Naive thymus-derived CD4-positive, alpha-beta T cell (primary cell): ENCODE measurements at regions of chr12 and their contacts with region 1.

Region 1: GRCh38 chr12:57744777-57745484 is at the start of gene TSPAN31:
- DNase-seq: peak; percentile 70 to 97 (median 94)
- ATAC-seq: peak; percentile 89
- H3K4me3 ChIP-seq: peak within 1 kb of the TSS; percentile 92
- H3K4me3 Mint-ChIP-seq: peak within 1 kb of the TSS; percentile 82 to 100 (median 91)
- H3K27ac ChIP-seq: peak within 1 kb of the TSS; percentile 91
- H3K27ac Mint-ChIP-seq: peak within 1 kb of the TSS; percentile 88 to 97 (median 95)
- H3K4me1 ChIP-seq: peaks cover 33 to 34% of the 10 kb centered on the region in 2 donors
- H3K4me1 Mint-ChIP-seq: peaks cover 35 to 64% (median 52%) of the 10 kb centered on the region in 7 donors
- H3K27me3 ChIP-seq: no peaks in the 10 kb centered on the region
- H3K27me3 Mint-ChIP-seq: no peaks in the 10 kb centered on the region
- total RNA-seq, gene TSPAN31: 12.3 to 23.9 (median 20.3) TPM

Region 2: DNA sequence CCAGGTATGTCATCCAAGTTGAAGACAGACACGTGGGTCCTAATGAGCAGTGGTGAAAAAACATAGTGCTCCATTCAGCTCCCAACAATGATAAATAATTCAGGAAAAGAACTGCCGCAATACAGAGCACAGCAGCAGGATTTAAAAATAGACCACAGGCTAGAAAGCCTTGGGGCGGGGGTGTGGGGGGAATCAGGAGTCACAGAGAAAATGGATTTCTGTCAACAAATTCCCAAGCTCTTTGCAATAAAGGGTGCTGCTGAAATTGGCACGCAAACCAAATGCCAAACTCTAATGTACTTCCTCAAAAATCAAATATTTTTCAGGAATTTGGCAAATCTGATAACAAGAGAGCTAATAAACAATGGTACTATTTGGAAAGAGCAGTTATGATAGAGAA is 372.7 kb before region 1 on chr12:
- CTCF ChIA-PET with region 1: no interaction called
- POLR2A ChIA-PET with region 1: no interaction called
- intact Hi-C with region 1: no loop called
- DNase-seq: no peak
- ATAC-seq: no peak
- H3K4me3 ChIP-seq: no peak overlapping the region
- H3K4me3 Mint-ChIP-seq: no peak overlapping the region
- H3K27ac ChIP-seq: no peak overlapping the region
- H3K27ac Mint-ChIP-seq: no peak overlapping the region
- H3K4me1 ChIP-seq: no peaks in the 10 kb centered on the region
- H3K4me1 Mint-ChIP-seq: peaks cover under 1 to 31% (median 23%) of the 10 kb centered on the region in 7 donors
- H3K27me3 ChIP-seq: no peaks in the 10 kb centered on the region
- H3K27me3 Mint-ChIP-seq: no peaks in the 10 kb centered on the region

Region 3: GRCh38 chr12:57430931-57431720 is 313.8 kb before region 1 on chr12 and contains the start of gene R3HDM2:
- CTCF ChIA-PET with region 1: no interaction called
- POLR2A ChIA-PET with region 1: no interaction called
- intact Hi-C with region 1: loop called in 1 of 2 experiments (anchors 2 kb)
- DNase-seq: peak; percentile 83 to 96 (median 94)
- ATAC-seq: peak; percentile 95
- H3K4me3 ChIP-seq: peak within 1 kb of the TSS; percentile 55
- H3K4me3 Mint-ChIP-seq: peak within 1 kb of the TSS; percentile 88 to 100 (median 98)
- H3K27ac ChIP-seq: peak within 1 kb of the TSS; percentile 85
- H3K27ac Mint-ChIP-seq: peak within 1 kb of the TSS; percentile 97 to 100 (median 99)
- H3K4me1 ChIP-seq: peaks cover 8 to 17% of the 10 kb centered on the region in 2 donors
- H3K4me1 Mint-ChIP-seq: peaks cover 27 to 53% (median 39%) of the 10 kb centered on the region in 7 donors
- H3K27me3 ChIP-seq: no peaks in the 10 kb centered on the region
- H3K27me3 Mint-ChIP-seq: no peaks in the 10 kb centered on the region
- total RNA-seq, gene R3HDM2: 74.9 to 145 (median 120) TPM

Region 4: DNA sequence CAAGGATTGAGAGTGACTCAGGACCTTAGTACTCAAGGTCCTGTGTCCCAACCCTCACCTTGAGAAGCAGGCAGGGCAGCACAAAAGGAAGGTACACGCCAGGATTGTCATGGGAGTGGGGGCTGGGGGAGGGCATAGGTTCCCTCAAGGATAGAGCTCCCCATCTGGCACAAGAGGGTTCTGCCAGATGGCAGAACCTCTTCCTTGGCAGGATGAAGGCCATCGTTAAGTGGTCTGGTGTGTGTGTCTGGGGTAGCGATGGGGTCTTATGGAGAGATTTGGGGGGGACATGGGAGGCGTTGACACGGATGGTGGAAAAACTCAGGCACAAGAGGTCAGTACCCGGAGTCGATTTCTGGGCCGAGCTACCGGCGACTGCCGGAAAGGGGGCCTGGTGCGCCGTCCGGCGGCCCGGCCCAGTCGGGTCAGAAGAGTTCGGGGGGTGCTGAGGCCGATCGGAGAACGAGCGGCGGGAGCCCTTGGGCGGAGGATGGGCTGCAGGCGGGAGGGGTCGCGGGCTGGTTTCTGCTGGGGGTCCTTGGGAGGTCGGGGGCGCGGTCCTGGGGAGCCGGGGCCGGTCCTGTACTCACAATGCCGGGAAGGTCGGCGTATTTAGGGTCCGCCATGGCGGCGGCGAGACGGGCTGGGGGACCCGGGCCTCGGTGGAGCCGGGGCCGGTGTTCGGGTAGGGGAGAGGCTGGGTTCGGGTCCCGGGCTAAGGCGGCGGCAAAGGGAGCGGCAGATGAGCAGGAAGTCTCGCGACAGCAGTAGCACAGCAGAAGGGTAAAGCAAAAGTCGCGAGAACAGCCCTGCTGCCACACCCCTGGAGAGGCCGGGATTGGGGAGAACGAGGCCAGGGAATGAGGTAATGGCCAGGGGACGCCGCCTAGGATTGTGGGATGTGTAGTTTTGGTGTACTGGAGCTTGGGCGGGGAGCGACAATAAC is 198.2 kb before region 1 on chr12 and contains the start of gene DCTN2:
- CTCF ChIA-PET with region 1: no interaction called
- POLR2A ChIA-PET with region 1: interaction called, 3 read pairs
- intact Hi-C with region 1: loop called in 1 of 2 experiments (anchors 1 kb)
- DNase-seq: peak; percentile 63 to 94 (median 88)
- ATAC-seq: peak; percentile 98
- H3K4me3 ChIP-seq: peak within 1 kb of the TSS; percentile 74
- H3K4me3 Mint-ChIP-seq: peak within 1 kb of the TSS; percentile 88 to 100 (median 98)
- H3K27ac ChIP-seq: peak within 1 kb of the TSS; percentile 88
- H3K27ac Mint-ChIP-seq: peak within 1 kb of the TSS; percentile 85 to 96 (median 92)
- H3K4me1 ChIP-seq: peaks cover 10 to 16% of the 10 kb centered on the region in 2 donors
- H3K4me1 Mint-ChIP-seq: peaks cover 28 to 64% (median 55%) of the 10 kb centered on the region in 7 donors
- H3K27me3 ChIP-seq: no peaks in the 10 kb centered on the region
- H3K27me3 Mint-ChIP-seq: peaks cover 0 to 28% (median 0%) of the 10 kb centered on the region in 5 donors
- total RNA-seq, gene DCTN2: 52.1 to 78.8 (median 63.0) TPM

Region 5: GRCh38 chr12:57632694-57633477 is 112.0 kb before region 1 on chr12 and contains the start of gene B4GALNT1:
- CTCF ChIA-PET with region 1: interaction called, 3 read pairs
- POLR2A ChIA-PET with region 1: no interaction called
- intact Hi-C with region 1: loop called (anchors 1 to 2 kb)
- DNase-seq: peak; percentile 33 to 74 (median 63)
- ATAC-seq: peak; percentile 96
- H3K4me3 ChIP-seq: peak within 1 kb of the TSS; percentile 57
- H3K4me3 Mint-ChIP-seq: peak within 1 kb of the TSS; percentile 51 to 83 (median 70)
- H3K27ac ChIP-seq: no peak within 1 kb of the TSS
- H3K27ac Mint-ChIP-seq: peak within 1 kb of the TSS in 3 of 9 donors; percentile 13 to 66 (median 46)
- H3K4me1 ChIP-seq: peaks cover 8% of the 10 kb centered on the region in 2 donors
- H3K4me1 Mint-ChIP-seq: peaks cover 0 to 14% (median 10%) of the 10 kb centered on the region in 7 donors
- H3K27me3 ChIP-seq: peaks cover 0 to 18% of the 10 kb centered on the region in 2 donors
- H3K27me3 Mint-ChIP-seq: peaks cover 34 to 69% (median 49%) of the 10 kb centered on the region in 5 donors
- total RNA-seq, gene B4GALNT1: 1.4 TPM in 1 of 5 experiments, not detected in the others

Region 6: DNA sequence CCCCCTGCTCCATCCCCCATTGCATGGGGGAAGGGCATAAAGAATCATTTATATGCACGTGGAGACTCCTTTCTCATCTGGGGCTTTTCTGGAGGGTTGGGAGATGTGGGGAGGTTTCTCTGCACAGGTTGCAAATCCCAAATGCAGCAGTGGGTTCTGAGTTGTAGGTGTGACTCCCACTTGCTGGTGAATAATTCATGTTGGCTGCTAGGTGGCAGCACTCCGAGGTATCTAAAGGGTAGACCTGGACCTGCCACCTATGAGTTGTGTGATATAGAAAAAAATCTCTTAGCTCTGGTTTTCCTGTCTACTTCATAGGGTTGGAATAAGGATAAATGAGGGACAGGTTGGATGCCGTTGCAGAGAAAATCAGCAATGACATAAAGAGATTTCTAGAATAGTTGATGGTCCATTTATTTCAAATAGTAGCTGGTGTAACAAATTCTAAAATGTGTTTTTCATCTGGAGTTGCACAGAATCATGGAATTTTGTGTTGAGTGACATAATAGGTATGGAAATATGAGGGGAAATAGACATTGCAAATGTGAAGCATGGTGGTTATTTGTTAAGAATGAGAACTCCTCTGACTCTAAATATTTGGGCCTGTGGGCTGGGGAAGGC is 14.5 kb after region 1 on chr12:
- CTCF ChIA-PET with region 1: interaction called, 11 read pairs
- POLR2A ChIA-PET with region 1: interaction called, 17 read pairs
- intact Hi-C with region 1: loop called (anchors 2 kb)
- DNase-seq: peak in 5 of 9 donors; percentile 47 to 57 (median 51)
- ATAC-seq: peak; percentile 28
- H3K4me3 ChIP-seq: no peak overlapping the region
- H3K4me3 Mint-ChIP-seq: peak overlapping the region in 1 of 10 donors; percentile 64
- H3K27ac ChIP-seq: no peak overlapping the region
- H3K27ac Mint-ChIP-seq: peak overlapping the region in 4 of 9 donors; percentile 16 to 64 (median 28)
- H3K4me1 ChIP-seq: peaks cover 16 to 24% of the 10 kb centered on the region in 2 donors
- H3K4me1 Mint-ChIP-seq: peaks cover 31 to 49% (median 42%) of the 10 kb centered on the region in 7 donors
- H3K27me3 ChIP-seq: peaks cover 0 to 3% of the 10 kb centered on the region in 2 donors
- H3K27me3 Mint-ChIP-seq: peaks cover 2 to 16% (median 9%) of the 10 kb centered on the region in 5 donors

Region 7: GRCh38 chr12:57846577-57847319 is 101.8 kb after region 1 on chr12 and contains the start of gene CTDSP2:
- CTCF ChIA-PET with region 1: no interaction called
- POLR2A ChIA-PET with region 1: interaction called, 4 read pairs
- intact Hi-C with region 1: loop called in 1 of 2 experiments (anchors 2 kb)
- DNase-seq: peak; percentile 59 to 92 (median 82)
- ATAC-seq: peak; percentile 85
- H3K4me3 ChIP-seq: peak within 1 kb of the TSS; percentile 79
- H3K4me3 Mint-ChIP-seq: peak within 1 kb of the TSS; percentile 87 to 97 (median 92)
- H3K27ac ChIP-seq: peak within 1 kb of the TSS; percentile 89
- H3K27ac Mint-ChIP-seq: peak within 1 kb of the TSS; percentile 75 to 94 (median 89)
- H3K4me1 ChIP-seq: peaks cover 15 to 30% of the 10 kb centered on the region in 2 donors
- H3K4me1 Mint-ChIP-seq: peaks cover 48 to 57% (median 50%) of the 10 kb centered on the region in 7 donors
- H3K27me3 ChIP-seq: no peaks in the 10 kb centered on the region
- H3K27me3 Mint-ChIP-seq: peaks cover 0 to 39% (median 9%) of the 10 kb centered on the region in 5 donors
- total RNA-seq, gene CTDSP2: 124 to 295 (median 145) TPM